ENCODE measurements at regions of chr5 and their contacts with region 1.

Region 1: DNA sequence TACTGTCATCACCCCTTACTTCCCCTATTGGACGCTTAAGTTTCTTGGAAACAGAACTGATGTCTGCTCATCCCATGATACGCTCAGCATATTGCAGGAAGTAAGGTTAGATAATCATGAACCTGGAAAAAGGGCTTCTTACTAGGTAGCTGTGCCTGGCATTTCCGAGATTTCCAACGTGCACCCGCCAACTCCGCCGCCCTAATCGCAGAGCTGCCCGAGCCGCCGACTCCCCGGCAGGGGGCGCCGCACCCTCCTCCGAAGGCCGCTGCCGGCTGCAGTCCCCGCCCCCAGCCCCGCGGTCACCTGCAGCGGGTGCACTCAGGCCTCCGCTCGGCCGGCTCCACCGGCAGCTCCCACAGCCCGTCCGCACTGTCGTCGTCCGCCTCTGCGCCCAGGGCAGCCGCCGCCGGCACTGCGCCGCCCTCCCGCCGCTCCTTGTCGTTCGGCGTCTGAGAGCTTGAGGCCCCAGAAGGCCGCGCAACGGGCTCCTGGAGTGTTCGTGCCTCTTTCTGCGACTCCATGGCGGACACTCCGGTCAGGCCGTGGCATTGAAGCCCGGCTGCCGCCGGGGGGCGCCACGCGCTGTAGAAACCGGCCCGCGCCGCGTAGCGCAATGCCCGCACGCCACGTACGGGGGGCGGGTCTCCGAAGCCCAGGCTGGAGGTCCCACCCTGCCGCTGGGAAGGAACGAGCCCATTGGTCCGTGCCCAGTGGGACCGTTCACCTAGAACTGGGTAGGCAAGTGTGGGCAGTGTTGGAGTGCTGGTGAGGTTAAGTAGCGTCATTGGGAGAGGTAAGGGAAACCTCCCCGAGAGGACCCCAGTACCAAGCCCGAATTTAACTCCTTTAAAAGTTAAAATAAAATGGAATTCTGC is at the start of gene DTWD2:
- DNase-seq: peak; percentile 96
- H3K4me3 ChIP-seq: peak within 1 kb of the TSS; percentile 78 to 87
- H3K27ac ChIP-seq: peak within 1 kb of the TSS; percentile 73 to 95
- H3K4me1 ChIP-seq: peaks cover 3 to 18% of the 10 kb centered on the region in 2 experiments; a peak in 3 of 4 replicates
- H3K27me3 ChIP-seq: no peaks in the 10 kb centered on the region
- CTCF ChIP-seq: peak; percentile 89
- EP300 ChIP-seq: no peak
- RAD21 ChIP-seq: peak; percentile 77
- polyA plus RNA-seq, gene DTWD2: 2.4 and 2.5 TPM in 2 replicates

Region 2: GRCh38 chr5:118968925-118969375 is 19.3 kb before region 1 on chr5:
- CTCF ChIA-PET with region 1: interaction called, 13 read pairs
- POLR2A ChIA-PET with region 1: no interaction called
- DNase-seq: no peak
- H3K4me3 ChIP-seq: no peak overlapping the region
- H3K27ac ChIP-seq: no peak overlapping the region
- H3K4me1 ChIP-seq: no peaks in the 10 kb centered on the region; a peak in 1 of 4 replicates
- H3K27me3 ChIP-seq: no peaks in the 10 kb centered on the region
- CTCF ChIP-seq: no peak
- EP300 ChIP-seq: no peak
- RAD21 ChIP-seq: no peak

Region 3: DNA sequence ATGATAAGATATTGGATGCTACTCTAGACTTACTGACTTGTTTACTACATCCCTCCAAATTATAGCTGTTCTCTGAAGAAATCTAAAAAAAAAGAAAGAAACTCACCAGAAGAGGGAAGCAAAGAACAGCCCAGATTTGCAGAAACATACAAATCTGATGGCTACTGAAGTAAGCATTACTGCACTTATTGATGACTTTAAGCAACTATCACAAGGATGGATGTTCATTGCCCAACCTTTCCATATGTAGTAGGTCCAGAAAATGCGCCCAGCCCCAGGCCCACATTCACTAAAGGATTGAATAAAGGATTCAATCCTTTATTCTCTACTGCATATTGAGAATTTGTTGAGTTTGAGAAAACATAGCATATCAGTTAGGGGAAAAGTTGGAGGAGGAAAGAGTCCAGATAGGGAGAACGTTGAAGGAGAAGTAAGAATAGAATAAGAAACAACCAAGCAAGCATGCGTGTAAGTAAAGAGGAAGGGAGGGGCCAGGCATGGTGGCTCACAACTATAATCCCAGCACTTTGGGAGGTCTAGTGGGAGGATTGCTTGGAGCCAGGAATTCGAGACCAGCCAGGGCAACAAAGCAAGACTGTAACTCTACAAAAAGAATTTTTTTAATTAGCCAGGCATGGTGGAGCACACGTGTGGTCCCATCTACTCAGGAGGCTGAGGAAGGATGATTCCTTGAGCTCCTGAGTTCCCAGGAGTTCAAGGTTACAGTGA is 34.0 kb after region 1 on chr5:
- CTCF ChIA-PET with region 1: interaction called, 10 read pairs
- POLR2A ChIA-PET with region 1: no interaction called
- DNase-seq: peak; percentile 33
- H3K4me3 ChIP-seq: no peak overlapping the region
- H3K27ac ChIP-seq: no peak overlapping the region
- H3K4me1 ChIP-seq: no peaks in the 10 kb centered on the region; a peak in 1 of 4 replicates
- H3K27me3 ChIP-seq: no peaks in the 10 kb centered on the region
- CTCF ChIP-seq: peak; percentile 69
- EP300 ChIP-seq: no peak
- RAD21 ChIP-seq: peak; percentile 74

Region 4: DNA sequence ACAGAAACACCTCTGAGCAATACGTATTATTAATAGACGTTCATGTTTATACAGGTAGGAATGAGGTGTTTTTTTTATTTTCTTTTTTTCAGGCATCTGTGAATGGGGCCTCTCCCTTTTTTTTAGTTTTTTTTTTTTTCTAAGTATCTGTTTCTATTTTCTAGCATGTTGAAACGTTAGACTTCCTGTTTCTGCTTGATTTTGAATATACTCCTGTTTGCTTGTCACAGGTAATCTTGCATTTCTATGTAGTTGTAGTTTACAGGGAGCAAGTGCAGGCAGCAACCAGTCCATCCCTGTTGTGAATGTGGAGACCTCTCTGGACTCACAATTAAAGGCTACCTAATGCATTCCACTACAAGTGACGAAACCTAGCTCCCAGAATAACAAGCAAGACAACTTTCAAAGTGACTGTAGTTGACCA is 344.8 kb after region 1 on chr5:
- CTCF ChIA-PET with region 1: interaction called, 42 read pairs
- POLR2A ChIA-PET with region 1: no interaction called
- DNase-seq: no peak
- H3K4me3 ChIP-seq: no peak overlapping the region
- H3K27ac ChIP-seq: no peak overlapping the region
- H3K4me1 ChIP-seq: peaks cover 10 to 18% of the 10 kb centered on the region in 2 experiments; a peak in 2 of 4 replicates
- H3K27me3 ChIP-seq: no peaks in the 10 kb centered on the region
- CTCF ChIP-seq: no peak
- EP300 ChIP-seq: no peak
- RAD21 ChIP-seq: no peak

Region 5: GRCh38 chr5:119360905-119361593 is 372.8 kb after region 1 on chr5:
- CTCF ChIA-PET with region 1: interaction called, 11 read pairs
- POLR2A ChIA-PET with region 1: no interaction called
- DNase-seq: no peak
- H3K4me3 ChIP-seq: no peak overlapping the region
- H3K27ac ChIP-seq: no peak overlapping the region
- H3K4me1 ChIP-seq: no peaks in the 10 kb centered on the region; a peak in 2 of 4 replicates
- H3K27me3 ChIP-seq: no peaks in the 10 kb centered on the region
- CTCF ChIP-seq: no peak
- EP300 ChIP-seq: no peak
- RAD21 ChIP-seq: no peak

Region 6: DNA sequence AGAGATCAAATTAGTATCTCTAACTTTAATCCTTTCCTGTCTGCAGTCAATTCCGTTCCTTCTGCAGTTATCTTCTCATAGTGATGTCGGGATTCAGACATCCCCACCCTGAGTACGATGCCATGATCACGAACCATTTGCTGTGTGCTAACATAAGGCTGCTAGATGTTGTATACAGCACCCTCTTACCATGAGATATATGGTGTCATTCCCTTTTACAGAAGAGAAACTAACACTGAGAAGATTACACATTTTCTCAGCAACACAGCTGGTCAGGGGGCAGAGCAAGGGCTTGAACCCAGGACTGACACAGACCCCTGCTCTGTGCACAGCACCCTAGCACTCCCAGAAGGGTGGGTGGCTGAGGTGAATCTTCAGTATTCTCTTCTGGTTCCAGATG is 417.2 kb after region 1 on chr5:
- CTCF ChIA-PET with region 1: interaction called, 175 read pairs
- POLR2A ChIA-PET with region 1: interaction called, 10 read pairs
- DNase-seq: no peak
- H3K4me3 ChIP-seq: no peak overlapping the region
- H3K27ac ChIP-seq: no peak overlapping the region
- H3K4me1 ChIP-seq: peaks cover 0 to under 1% of the 10 kb centered on the region in 2 experiments; a peak in 1 of 4 replicates
- H3K27me3 ChIP-seq: no peaks in the 10 kb centered on the region
- CTCF ChIP-seq: no peak
- EP300 ChIP-seq: no peak
- RAD21 ChIP-seq: no peak

Region 7: DNA sequence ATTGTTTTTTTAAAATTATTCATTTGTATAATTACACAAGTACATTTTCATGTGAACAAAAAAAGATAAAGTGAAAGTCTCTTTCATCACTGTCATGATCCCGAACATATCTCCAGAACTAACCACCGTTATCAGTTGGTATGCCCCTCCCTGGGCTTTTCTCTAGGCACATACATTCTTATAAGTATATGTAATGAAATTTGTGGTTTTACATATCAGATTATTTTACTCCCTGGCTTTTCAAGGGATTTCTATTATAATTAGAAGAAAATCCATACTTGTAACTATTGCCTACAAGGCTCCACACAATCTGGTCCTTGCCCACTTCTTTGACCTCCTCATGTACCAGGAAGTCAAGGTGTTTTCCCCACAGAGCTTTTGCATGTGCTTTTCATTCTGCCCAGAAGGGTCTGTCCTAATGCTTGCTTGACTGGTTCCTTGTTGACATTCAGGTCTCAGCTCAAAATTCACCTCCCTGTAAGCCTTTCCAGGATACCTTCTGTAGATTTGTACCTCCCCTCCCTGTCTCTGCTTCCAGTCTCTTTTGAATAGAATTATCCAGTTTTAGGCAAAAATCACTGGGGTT is 430.4 kb after region 1 on chr5:
- CTCF ChIA-PET with region 1: interaction called, 175 read pairs
- POLR2A ChIA-PET with region 1: no interaction called
- DNase-seq: no peak
- H3K4me3 ChIP-seq: no peak overlapping the region
- H3K27ac ChIP-seq: no peak overlapping the region
- H3K4me1 ChIP-seq: no peaks in the 10 kb centered on the region; a peak in 1 of 4 replicates
- H3K27me3 ChIP-seq: no peaks in the 10 kb centered on the region
- CTCF ChIP-seq: no peak
- EP300 ChIP-seq: no peak
- RAD21 ChIP-seq: no peak